Activated naive CD4-positive, alpha-beta T cell treated with anti-CD3 and anti-CD28 coated beads for 36 hours (primary cell): ENCODE measurements at regions of chr22 and their contacts with region 1.

Region 1: GRCh38 chr22:22959147-22959827 is 71.7 kb downstream of the IGLL5 start:
- DNase-seq: peak; percentile 88
- H3K4me3 Mint-ChIP-seq: no peak overlapping the region
- H3K27ac Mint-ChIP-seq: no peak overlapping the region
- H3K4me1 Mint-ChIP-seq: peaks cover 2% of the 10 kb centered on the region
- H3K27me3 Mint-ChIP-seq: peaks cover 15% of the 10 kb centered on the region

Region 2: GRCh38 chr22:22787786-22788459 is 171.4 kb before region 1 on chr22:
- CTCF ChIA-PET with region 1: interaction called, 20 read pairs
- intact Hi-C with region 1: no loop called
- DNase-seq: peak; percentile 74
- H3K4me3 Mint-ChIP-seq: no peak overlapping the region
- H3K27ac Mint-ChIP-seq: no peak overlapping the region
- H3K4me1 Mint-ChIP-seq: peaks cover 16% of the 10 kb centered on the region
- H3K27me3 Mint-ChIP-seq: no peaks in the 10 kb centered on the region

Region 3: DNA sequence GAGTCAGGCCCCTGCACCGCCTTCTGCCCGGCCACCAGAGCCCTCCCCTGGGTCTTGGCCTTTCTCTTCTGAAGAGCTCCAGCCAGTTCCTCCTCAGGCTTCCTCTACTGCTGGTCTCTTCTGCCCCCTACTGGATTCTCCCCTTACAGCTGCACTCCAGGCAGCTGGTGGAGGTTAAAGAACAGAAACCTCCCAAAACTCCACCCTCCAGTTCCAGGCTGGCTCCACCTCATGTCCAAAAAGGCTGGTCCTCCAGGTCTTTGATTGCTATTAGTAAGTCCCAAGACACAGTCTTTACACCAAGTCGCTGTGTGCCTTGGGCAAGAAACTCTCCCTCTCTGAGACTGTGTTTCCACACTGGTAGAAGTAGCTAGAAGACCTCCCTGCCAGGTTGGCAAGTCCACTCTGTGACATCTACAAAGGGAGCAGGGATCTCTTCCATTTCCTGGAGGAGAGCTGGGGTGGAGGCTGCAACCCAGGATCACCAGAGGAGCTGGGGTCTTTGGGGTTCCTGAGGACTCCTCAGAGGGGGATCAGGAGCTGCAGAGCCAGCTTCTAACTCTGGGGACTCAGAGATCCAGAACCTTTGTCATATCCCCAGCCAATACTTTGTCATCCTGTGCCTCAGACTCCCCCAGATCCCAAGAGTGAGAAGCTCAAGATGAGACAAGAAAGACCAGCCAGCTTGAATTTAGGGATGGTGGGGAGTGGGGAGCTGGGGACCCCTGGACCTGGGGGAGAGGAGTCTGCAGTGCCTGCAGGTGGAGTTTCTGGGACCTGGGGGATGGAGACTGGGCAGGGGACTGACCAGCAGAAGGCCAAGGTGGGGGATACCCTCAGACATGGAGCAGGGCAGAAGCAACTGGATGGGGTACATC is 75.0 kb before region 1 on chr22:
- CTCF ChIA-PET with region 1: interaction called, 24 read pairs
- intact Hi-C with region 1: loop called (anchors 5 kb)
- DNase-seq: peak; percentile 79
- H3K4me3 Mint-ChIP-seq: no peak overlapping the region
- H3K27ac Mint-ChIP-seq: no peak overlapping the region
- H3K4me1 Mint-ChIP-seq: peaks cover 7% of the 10 kb centered on the region
- H3K27me3 Mint-ChIP-seq: no peaks in the 10 kb centered on the region

Region 4: GRCh38 chr22:22976033-22976922 is 17.0 kb after region 1 on chr22:
- CTCF ChIA-PET with region 1: interaction called, 13 read pairs
- intact Hi-C with region 1: no loop called
- DNase-seq: no peak
- H3K4me3 Mint-ChIP-seq: no peak overlapping the region
- H3K27ac Mint-ChIP-seq: no peak overlapping the region
- H3K4me1 Mint-ChIP-seq: no peaks in the 10 kb centered on the region
- H3K27me3 Mint-ChIP-seq: peaks cover 22% of the 10 kb centered on the region

Region 5: GRCh38 chr22:23102776-23103175 is 143.5 kb after region 1 on chr22:
- CTCF ChIA-PET with region 1: no interaction called
- intact Hi-C with region 1: no loop called
- DNase-seq: no peak
- H3K4me3 Mint-ChIP-seq: no peak overlapping the region
- H3K27ac Mint-ChIP-seq: no peak overlapping the region
- H3K4me1 Mint-ChIP-seq: no peaks in the 10 kb centered on the region
- H3K27me3 Mint-ChIP-seq: no peaks in the 10 kb centered on the region

Region 6: GRCh38 chr22:23128269-23129108 is 169.2 kb after region 1 on chr22:
- CTCF ChIA-PET with region 1: interaction called, 232 read pairs
- intact Hi-C with region 1: loop called (anchors 1 kb)
- DNase-seq: peak; percentile 80
- H3K4me3 Mint-ChIP-seq: no peak overlapping the region
- H3K27ac Mint-ChIP-seq: no peak overlapping the region
- H3K4me1 Mint-ChIP-seq: no peaks in the 10 kb centered on the region
- H3K27me3 Mint-ChIP-seq: no peaks in the 10 kb centered on the region

Region 7: GRCh38 chr22:23385291-23386244 is 426.3 kb after region 1 on chr22:
- CTCF ChIA-PET with region 1: interaction called, 12 read pairs
- intact Hi-C with region 1: loop called (anchors 1 kb)
- DNase-seq: peak; percentile 89
- H3K4me3 Mint-ChIP-seq: no peak overlapping the region
- H3K27ac Mint-ChIP-seq: no peak overlapping the region
- H3K4me1 Mint-ChIP-seq: no peaks in the 10 kb centered on the region
- H3K27me3 Mint-ChIP-seq: peaks cover 2% of the 10 kb centered on the region